ENCODE measurements at regions of chr2 and their contacts with region 1.

Region 1: GRCh38 chr2:223797811-223798721 is 39.3 kb downstream of the AP1S3 start:
- DNase-seq: no peak
- H3K4me3 ChIP-seq: no peak overlapping the region
- H3K27ac ChIP-seq: no peak overlapping the region
- H3K4me1 ChIP-seq: no peaks in the 10 kb centered on the region
- H3K27me3 ChIP-seq: no peaks in the 10 kb centered on the region
- CTCF ChIP-seq: peak in 2 of 3 experiments; percentile 32 to 37; a peak in 2 of 4 replicates
- EP300 ChIP-seq: no peak
- POLR2A ChIP-seq: no peak
- RAD21 ChIP-seq: peak; percentile 65 to 66

Region 2: DNA sequence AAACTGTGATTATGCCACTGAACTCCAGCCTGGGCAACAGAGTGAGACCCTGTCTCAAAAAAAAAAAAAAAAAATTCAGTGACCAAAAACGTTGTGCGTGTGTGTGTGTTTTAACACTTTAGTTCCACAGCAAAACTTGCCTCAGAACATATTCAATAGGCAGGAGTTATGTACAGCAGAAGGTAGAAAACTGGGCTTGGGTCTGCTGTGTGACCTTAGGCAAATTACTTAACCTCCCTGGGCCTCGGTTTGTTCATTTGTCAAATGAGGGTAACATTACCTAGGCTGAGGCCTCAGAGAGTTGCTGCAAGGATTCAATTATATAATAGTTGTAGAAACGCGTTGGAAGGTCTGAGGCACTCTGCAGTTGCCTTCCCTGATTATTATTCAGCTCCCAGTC is 185.6 kb before region 1 on chr2:
- CTCF ChIA-PET with region 1: no interaction called
- POLR2A ChIA-PET with region 1: no interaction called
- DNase-seq: no peak
- H3K4me3 ChIP-seq: peak overlapping the region in 3 of 4 experiments; percentile 26 to 49 (median 34); a peak in 4 of 8 replicates
- H3K27ac ChIP-seq: no peak overlapping the region
- H3K4me1 ChIP-seq: peaks cover 0 to 10% (median 3%) of the 10 kb centered on the region in 4 experiments; a peak in 4 of 7 replicates
- H3K27me3 ChIP-seq: peaks cover 40 to 54% (median 53%) of the 10 kb centered on the region in 4 experiments
- CTCF ChIP-seq: no peak
- EP300 ChIP-seq: no peak
- POLR2A ChIP-seq: no peak
- RAD21 ChIP-seq: no peak

Region 3: GRCh38 chr2:223727562-223727961 is 70.5 kb before region 1 on chr2:
- CTCF ChIA-PET with region 1: interaction called, 13 read pairs
- POLR2A ChIA-PET with region 1: no interaction called
- DNase-seq: no peak
- H3K4me3 ChIP-seq: no peak overlapping the region
- H3K27ac ChIP-seq: no peak overlapping the region
- H3K4me1 ChIP-seq: peaks cover 8 to 29% (median 20%) of the 10 kb centered on the region in 4 experiments; a peak in 6 of 7 replicates
- H3K27me3 ChIP-seq: no peaks in the 10 kb centered on the region
- CTCF ChIP-seq: peak in 2 of 3 experiments; percentile 64 to 78; a peak in 3 of 4 replicates
- EP300 ChIP-seq: no peak
- POLR2A ChIP-seq: no peak
- RAD21 ChIP-seq: peak; percentile 58 to 68

Region 4: GRCh38 chr2:223760838-223761502 is 37.1 kb before region 1 on chr2:
- CTCF ChIA-PET with region 1: interaction called, 14 read pairs
- POLR2A ChIA-PET with region 1: no interaction called
- DNase-seq: no peak
- H3K4me3 ChIP-seq: no peak overlapping the region
- H3K27ac ChIP-seq: no peak overlapping the region
- H3K4me1 ChIP-seq: no peaks in the 10 kb centered on the region
- H3K27me3 ChIP-seq: no peaks in the 10 kb centered on the region
- CTCF ChIP-seq: peak; percentile 27 to 65 (median 40); a peak in 3 of 4 replicates
- EP300 ChIP-seq: no peak
- POLR2A ChIP-seq: no peak
- RAD21 ChIP-seq: peak; percentile 53 to 62

Region 5: GRCh38 chr2:223779877-223780276 is 18.2 kb before region 1 on chr2:
- CTCF ChIA-PET with region 1: interaction called, 16 read pairs
- POLR2A ChIA-PET with region 1: no interaction called
- DNase-seq: peak; percentile 17 to 62
- H3K4me3 ChIP-seq: no peak overlapping the region
- H3K27ac ChIP-seq: no peak overlapping the region
- H3K4me1 ChIP-seq: peaks cover 0 to 5% (median 3%) of the 10 kb centered on the region in 4 experiments; a peak in 2 of 7 replicates
- H3K27me3 ChIP-seq: no peaks in the 10 kb centered on the region
- CTCF ChIP-seq: peak; percentile 6 to 72 (median 61)
- EP300 ChIP-seq: no peak
- POLR2A ChIP-seq: no peak
- RAD21 ChIP-seq: peak; percentile 61 to 72

Region 6: GRCh38 chr2:223786943-223787342 is 11.1 kb before region 1 on chr2:
- CTCF ChIA-PET with region 1: interaction called, 13 read pairs
- POLR2A ChIA-PET with region 1: no interaction called
- DNase-seq: no peak
- H3K4me3 ChIP-seq: no peak overlapping the region
- H3K27ac ChIP-seq: no peak overlapping the region
- H3K4me1 ChIP-seq: peaks cover 0 to 5% (median under 1%) of the 10 kb centered on the region in 4 experiments; a peak in 1 of 7 replicates
- H3K27me3 ChIP-seq: no peaks in the 10 kb centered on the region
- CTCF ChIP-seq: no peak
- EP300 ChIP-seq: no peak
- POLR2A ChIP-seq: no peak
- RAD21 ChIP-seq: no peak

Region 7: DNA sequence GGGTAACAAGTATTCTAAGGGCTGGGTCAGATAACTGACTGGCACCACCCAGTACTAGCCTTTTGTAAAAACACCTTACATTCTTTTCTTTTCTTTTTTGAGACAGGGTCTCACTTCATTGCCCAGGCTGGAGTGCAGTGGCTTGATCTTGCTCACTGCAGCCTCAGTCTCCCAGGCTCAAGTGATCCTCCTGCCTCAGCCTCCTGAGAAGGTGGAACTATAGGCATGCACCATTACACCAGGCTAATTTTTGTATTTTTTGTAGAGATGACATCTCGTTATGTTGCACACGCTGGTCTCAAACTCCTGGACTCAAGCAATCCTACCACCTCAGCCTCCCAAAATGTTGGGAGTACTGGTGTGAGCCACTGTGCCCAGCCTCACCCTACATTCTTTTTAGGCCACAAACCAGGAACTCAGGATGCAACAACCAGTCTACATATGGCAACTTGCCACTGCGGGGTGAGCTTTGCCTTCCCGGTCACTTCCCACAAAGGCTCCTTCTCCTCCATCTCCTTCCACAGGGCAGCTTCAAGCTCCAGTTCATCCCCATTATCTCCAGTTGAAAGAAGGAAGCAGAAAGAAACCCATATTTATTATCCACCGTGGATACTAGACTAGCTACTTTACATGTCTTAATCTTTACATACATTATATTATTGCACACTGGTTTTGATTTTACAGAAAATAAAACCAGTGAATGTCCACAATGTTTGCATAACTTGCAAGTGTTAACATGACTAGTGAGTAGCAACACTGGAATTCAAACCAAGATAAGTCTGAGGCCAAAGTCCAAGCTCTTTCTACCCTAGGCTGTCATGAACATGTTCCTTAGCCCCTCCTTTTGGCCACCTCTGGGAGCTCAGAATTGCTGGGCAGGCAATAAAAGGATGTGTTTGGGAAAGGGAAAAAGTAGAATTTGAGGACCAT is 63.0 kb after region 1 on chr2:
- CTCF ChIA-PET with region 1: interaction called, 13 read pairs
- POLR2A ChIA-PET with region 1: no interaction called
- DNase-seq: no peak
- H3K4me3 ChIP-seq: no peak overlapping the region
- H3K27ac ChIP-seq: no peak overlapping the region
- H3K4me1 ChIP-seq: peaks cover 0 to 5% (median 0%) of the 10 kb centered on the region in 4 experiments; a peak in 1 of 7 replicates
- H3K27me3 ChIP-seq: no peaks in the 10 kb centered on the region
- CTCF ChIP-seq: no peak; a peak in 1 of 4 replicates
- EP300 ChIP-seq: no peak
- POLR2A ChIP-seq: no peak
- RAD21 ChIP-seq: no peak

Measured in H1 (cell line).